ENCODE measurements at regions of chr2 and their contacts with region 1.

Region 1: GRCh38 chr2:33475224-33476130 is 972 bp upstream of the RASGRP3 start:
- DNase-seq: peak in 9 of 10 donors; percentile 53 to 88 (median 78)
- ATAC-seq: peak; percentile 78 to 81
- H3K4me3 Mint-ChIP-seq: peak overlapping the region; percentile 88 to 99 (median 96)
- H3K27ac Mint-ChIP-seq: peak overlapping the region; percentile 96 to 100 (median 98)
- H3K4me1 Mint-ChIP-seq: peaks cover 19 to 45% (median 25%) of the 10 kb centered on the region in 4 donors
- H3K27me3 Mint-ChIP-seq: peaks cover 0 to 3% (median 0%) of the 10 kb centered on the region in 5 donors

Region 2: GRCh38 chr2:33219850-33220275 is 255.6 kb before region 1 on chr2:
- POLR2A ChIA-PET with region 1: no interaction called
- DNase-seq: no peak
- ATAC-seq: no peak
- H3K4me3 Mint-ChIP-seq: no peak overlapping the region
- H3K27ac Mint-ChIP-seq: no peak overlapping the region
- H3K4me1 Mint-ChIP-seq: no peaks in the 10 kb centered on the region
- H3K27me3 Mint-ChIP-seq: peaks cover 0 to 4% (median 3%) of the 10 kb centered on the region in 5 donors

Region 3: DNA sequence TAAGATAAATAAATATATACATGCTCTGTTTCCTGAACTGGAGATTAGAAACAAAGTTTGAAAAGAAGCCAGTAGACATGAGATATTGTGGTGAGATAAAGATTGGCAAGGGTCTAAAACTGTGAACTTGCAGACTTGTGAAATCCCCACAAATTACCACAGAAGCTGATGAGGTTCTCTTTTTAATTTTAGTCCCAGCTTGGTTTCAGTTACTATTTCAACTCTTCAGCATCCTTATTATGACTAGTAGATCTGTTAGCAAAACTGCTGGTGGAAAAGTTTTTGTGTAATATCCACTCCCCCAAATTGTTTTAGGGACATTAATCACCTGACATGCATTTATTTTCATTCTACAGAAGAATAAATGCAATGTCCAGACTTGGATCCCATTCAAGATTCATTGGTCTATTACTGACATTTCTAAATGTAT is 21.8 kb after region 1 on chr2:
- POLR2A ChIA-PET with region 1: no interaction called
- DNase-seq: peak in 2 of 10 donors; percentile 3 to 27
- ATAC-seq: peak in 1 of 2 donors; percentile 30
- H3K4me3 Mint-ChIP-seq: no peak overlapping the region
- H3K27ac Mint-ChIP-seq: peak overlapping the region in 1 of 10 donors; percentile 66
- H3K4me1 Mint-ChIP-seq: peaks cover 3 to 65% (median 11%) of the 10 kb centered on the region in 4 donors
- H3K27me3 Mint-ChIP-seq: peaks cover 0 to 12% (median 0%) of the 10 kb centered on the region in 5 donors

Region 4: DNA sequence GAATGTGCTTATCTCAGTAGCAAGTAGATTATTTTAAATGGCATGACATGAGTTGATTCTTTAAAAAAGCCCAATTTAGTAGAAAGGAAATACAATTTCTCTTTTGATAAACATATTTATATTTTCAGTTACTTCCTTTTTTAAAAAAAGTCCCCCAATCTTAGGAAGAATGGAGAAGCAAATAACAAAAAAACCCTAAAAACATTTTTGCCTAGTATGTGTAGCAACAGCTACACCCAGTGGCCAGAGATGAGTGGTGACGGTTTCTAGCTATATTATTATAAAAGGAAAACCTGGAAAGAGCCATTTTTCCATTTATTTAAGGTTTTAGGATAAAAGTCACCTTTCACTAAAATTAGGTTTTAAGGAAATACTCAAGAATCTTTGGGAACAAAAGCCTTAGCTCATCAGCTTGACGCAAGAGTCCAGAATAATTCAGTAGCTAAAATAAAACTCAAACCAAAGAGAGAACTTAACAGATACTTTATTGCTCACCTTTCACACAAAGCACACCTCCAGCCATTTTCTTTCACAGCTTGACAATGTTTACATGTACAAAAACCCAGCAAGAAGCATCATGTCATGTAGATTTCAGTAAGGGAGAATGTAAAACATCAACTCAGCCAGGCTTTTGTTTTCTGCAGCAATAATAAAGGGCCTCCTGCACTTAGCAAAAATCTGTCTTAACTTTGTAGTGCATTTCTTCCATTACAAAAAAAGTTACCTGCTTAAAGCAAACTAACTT is 107.9 kb after region 1 on chr2:
- POLR2A ChIA-PET with region 1: interaction called, 10 read pairs
- DNase-seq: peak in 5 of 10 donors; percentile 6 to 46 (median 35)
- ATAC-seq: peak; percentile 40 to 44
- H3K4me3 Mint-ChIP-seq: no peak overlapping the region
- H3K27ac Mint-ChIP-seq: peak overlapping the region in 1 of 10 donors; percentile 36
- H3K4me1 Mint-ChIP-seq: peaks cover 2 to 14% (median 6%) of the 10 kb centered on the region in 4 donors
- H3K27me3 Mint-ChIP-seq: no peaks in the 10 kb centered on the region

Region 5: DNA sequence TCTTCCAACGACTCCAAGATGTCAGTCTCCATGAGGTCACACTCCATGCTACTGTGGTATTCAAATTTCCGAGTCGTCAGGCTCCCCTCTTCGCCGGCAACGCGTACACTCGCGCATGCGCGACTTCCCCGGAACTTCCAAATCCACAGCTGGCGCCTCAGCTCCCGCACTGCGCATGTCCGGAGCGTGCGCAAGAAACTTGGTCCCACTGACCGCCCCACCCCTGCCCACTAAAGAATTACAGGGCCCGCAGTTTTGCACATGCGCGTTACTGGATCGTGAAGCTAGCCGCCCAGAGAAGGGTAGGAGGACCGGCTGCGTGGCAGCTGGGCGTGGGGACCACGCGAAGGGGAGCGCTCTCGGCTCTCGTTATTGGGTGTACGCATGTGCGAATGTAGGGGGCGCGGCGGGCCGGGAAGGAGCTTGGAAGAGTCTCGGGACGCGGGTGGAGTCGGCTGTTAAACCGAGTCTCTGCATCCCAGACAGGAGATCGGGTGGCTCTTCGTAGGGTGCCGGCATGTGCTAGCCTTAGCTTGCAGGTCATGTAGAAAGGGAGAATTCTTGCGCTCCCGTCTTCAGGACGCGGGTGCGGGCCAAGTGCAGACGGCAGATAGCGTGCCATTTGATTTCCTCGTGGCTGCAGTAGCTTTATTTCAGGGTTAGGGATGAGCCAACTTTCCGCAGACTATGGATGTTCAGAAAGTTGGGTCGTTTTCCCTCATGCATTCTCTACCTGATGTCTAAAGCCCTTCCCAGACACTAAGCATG is 123.9 kb after region 1 on chr2 and contains the start of gene FAM98A:
- POLR2A ChIA-PET with region 1: interaction called, 19 read pairs
- DNase-seq: peak; percentile 96 to 100 (median 98)
- ATAC-seq: peak; percentile 92 to 93
- H3K4me3 Mint-ChIP-seq: peak within 1 kb of the TSS; percentile 89 to 100 (median 98)
- H3K27ac Mint-ChIP-seq: peak within 1 kb of the TSS; percentile 93 to 98 (median 96)
- H3K4me1 Mint-ChIP-seq: peaks cover 19 to 39% (median 36%) of the 10 kb centered on the region in 4 donors
- H3K27me3 Mint-ChIP-seq: peaks cover 0 to 3% (median 0%) of the 10 kb centered on the region in 5 donors
- polyA plus RNA-seq, gene FAM98A: 9.5 to 14.9 (median 13.4) TPM

Measured in naive thymus-derived CD8-positive, alpha-beta T cell (primary cell).